Natural killer cell (primary cell): ENCODE measurements at regions of chr6 and their contacts with region 1.

Region 1: DNA sequence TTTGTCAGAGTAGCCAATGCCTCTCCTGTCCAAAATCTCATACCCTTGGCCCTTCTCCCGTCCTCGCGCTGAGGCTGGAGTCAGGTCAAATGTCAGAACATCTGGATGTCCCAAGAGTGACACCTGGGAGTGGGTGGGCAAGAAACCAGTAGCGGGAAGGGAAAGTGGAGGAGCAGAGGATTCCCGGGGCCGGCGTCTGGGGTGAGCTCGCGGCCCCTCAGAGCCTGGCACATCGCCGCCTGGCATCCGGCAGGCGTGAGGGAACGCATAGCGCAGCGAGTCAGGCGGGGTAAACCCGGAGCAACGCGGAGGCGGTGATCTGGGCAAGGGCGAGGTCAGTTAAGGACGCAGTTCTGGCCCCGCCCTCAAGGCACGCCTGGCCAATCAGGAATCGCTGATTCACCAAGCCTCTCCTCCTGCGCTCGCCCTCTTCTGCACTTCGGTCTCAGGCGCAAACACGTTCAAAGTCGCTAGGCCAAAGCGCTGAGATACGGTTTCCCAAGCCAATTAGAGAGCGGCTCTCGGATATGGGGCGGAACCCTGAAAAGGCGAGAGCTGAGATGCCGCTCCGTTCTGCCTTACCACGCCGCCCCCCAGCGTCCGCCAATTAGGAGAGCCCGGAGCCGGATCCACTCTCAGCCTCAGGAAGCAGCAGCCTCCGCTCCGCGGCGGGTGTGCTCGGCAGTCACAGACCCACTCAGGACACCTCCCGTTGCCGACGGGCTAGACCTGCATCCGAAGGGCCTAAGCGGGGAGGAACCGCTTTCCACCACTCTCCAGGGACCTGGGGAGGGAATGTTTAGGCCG is 22.5 kb downstream of the VPS52 start:
- DNase-seq: peak; percentile 96 to 99
- ATAC-seq: peak; percentile 86 to 96 (median 88)
- H3K4me3 ChIP-seq: peak overlapping the region; percentile 68
- H3K4me3 Mint-ChIP-seq: peak overlapping the region; percentile 90
- H3K27ac ChIP-seq: peak overlapping the region; percentile 94
- H3K27ac Mint-ChIP-seq: peak overlapping the region; percentile 95 to 97
- H3K4me1 ChIP-seq: peaks cover 28% of the 10 kb centered on the region
- H3K4me1 Mint-ChIP-seq: peaks cover 22 to 37% of the 10 kb centered on the region in 2 donors
- H3K27me3 ChIP-seq: no peaks in the 10 kb centered on the region
- H3K27me3 Mint-ChIP-seq: peaks cover 0 to under 1% of the 10 kb centered on the region in 2 donors
- CTCF ChIP-seq: no peak

Region 2: DNA sequence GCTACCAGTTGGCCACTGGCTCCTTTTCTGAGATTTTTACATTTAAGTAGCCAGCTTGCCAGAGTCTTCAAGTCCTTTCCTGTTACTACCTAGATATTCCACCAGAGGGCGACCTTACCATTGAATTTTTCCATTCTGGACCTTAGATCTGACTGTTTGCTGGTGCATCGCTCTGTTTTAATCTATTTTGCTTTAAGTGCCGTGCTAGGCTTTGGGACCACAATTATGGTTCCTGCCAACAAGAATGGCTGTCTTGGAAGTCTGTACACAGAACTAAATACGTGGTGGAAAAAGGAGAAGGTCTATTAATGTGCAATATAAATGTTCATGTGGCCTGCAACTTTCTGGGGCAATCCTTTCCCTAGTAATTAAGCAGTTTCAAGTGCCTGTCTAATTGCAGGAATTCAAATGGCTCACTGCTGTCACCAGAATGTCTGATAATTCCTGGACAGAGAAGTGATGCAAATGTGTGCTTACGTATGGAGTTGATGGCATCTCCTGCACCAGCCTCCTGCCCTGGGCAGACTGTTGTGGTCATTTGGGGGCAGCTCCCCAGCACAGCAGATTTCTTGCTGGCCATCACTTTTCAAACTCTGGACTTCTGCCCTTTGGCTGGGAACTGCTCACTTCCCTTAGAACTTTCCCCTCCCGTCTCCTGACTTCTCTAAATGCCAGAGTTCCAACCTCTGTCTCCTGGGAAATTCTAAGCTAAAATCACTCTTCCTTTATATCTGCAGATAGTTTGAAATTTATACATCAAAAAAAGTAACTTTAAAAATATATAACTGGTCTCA is 234.1 kb before region 1 on chr6:
- intact Hi-C with region 1: loop called (anchors 1 kb)
- DNase-seq: peak in 1 of 2 donors; percentile 90
- ATAC-seq: peak; percentile 77 to 85 (median 79)
- H3K4me3 ChIP-seq: no peak overlapping the region
- H3K4me3 Mint-ChIP-seq: no peak overlapping the region
- H3K27ac ChIP-seq: no peak overlapping the region
- H3K27ac Mint-ChIP-seq: no peak overlapping the region
- H3K4me1 ChIP-seq: peaks cover 20% of the 10 kb centered on the region
- H3K4me1 Mint-ChIP-seq: peaks cover 5 to 28% of the 10 kb centered on the region in 2 donors
- H3K27me3 ChIP-seq: no peaks in the 10 kb centered on the region
- H3K27me3 Mint-ChIP-seq: peaks cover 15 to 30% of the 10 kb centered on the region in 2 donors
- CTCF ChIP-seq: peak; percentile 80

Region 3: DNA sequence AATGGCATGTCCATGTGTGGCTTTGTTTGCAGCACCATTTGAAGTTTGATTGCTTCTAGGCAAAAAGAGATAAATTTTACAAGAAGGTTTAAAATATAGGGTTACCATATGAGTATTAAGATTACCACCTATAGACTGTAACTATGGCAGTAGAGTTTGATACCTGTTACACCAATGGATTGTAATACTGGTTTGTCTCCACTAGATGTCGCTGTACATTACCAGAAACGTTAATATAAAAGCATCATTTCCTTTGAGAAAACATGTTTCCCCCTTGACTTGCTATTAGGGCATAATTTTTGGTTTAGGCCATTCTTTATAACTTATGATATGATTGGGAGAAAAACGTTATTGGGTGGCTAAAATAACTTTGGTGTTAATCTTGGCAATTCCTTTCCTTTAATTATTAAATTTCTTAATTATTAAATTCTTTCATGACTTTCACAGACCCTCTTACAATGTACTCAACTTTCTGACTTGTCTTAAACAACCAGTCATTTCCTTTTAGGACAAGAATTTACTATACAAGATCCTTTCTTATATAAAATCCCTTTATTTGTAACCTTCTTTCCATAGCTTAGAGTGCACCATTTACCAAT is 130.5 kb before region 1 on chr6:
- intact Hi-C with region 1: loop called (anchors 1 kb)
- DNase-seq: peak in 1 of 2 donors; percentile 86
- ATAC-seq: peak; percentile 72 to 80 (median 80)
- H3K4me3 ChIP-seq: no peak overlapping the region
- H3K4me3 Mint-ChIP-seq: no peak overlapping the region
- H3K27ac ChIP-seq: no peak overlapping the region
- H3K27ac Mint-ChIP-seq: no peak overlapping the region
- H3K4me1 ChIP-seq: peaks cover 27% of the 10 kb centered on the region
- H3K4me1 Mint-ChIP-seq: peaks cover 0 to 7% of the 10 kb centered on the region in 2 donors
- H3K27me3 ChIP-seq: peaks cover 20% of the 10 kb centered on the region
- H3K27me3 Mint-ChIP-seq: peaks cover 43 to 52% of the 10 kb centered on the region in 2 donors
- CTCF ChIP-seq: peak; percentile 86

Region 4: GRCh38 chr6:33161354-33162331 is 87.5 kb before region 1 on chr6:
- intact Hi-C with region 1: loop called (anchors 1 kb)
- DNase-seq: peak; percentile 84 to 87
- ATAC-seq: peak; percentile 93 to 99 (median 99)
- H3K4me3 ChIP-seq: peak overlapping the region; percentile 44
- H3K4me3 Mint-ChIP-seq: peak overlapping the region; percentile 94
- H3K27ac ChIP-seq: no peak overlapping the region
- H3K27ac Mint-ChIP-seq: peak overlapping the region in 1 of 2 donors; percentile 90
- H3K4me1 ChIP-seq: peaks cover 12% of the 10 kb centered on the region
- H3K4me1 Mint-ChIP-seq: peaks cover 10 to 12% of the 10 kb centered on the region in 2 donors
- H3K27me3 ChIP-seq: no peaks in the 10 kb centered on the region
- H3K27me3 Mint-ChIP-seq: peaks cover 0 to 9% of the 10 kb centered on the region in 2 donors
- CTCF ChIP-seq: peak; percentile 89

Region 5: DNA sequence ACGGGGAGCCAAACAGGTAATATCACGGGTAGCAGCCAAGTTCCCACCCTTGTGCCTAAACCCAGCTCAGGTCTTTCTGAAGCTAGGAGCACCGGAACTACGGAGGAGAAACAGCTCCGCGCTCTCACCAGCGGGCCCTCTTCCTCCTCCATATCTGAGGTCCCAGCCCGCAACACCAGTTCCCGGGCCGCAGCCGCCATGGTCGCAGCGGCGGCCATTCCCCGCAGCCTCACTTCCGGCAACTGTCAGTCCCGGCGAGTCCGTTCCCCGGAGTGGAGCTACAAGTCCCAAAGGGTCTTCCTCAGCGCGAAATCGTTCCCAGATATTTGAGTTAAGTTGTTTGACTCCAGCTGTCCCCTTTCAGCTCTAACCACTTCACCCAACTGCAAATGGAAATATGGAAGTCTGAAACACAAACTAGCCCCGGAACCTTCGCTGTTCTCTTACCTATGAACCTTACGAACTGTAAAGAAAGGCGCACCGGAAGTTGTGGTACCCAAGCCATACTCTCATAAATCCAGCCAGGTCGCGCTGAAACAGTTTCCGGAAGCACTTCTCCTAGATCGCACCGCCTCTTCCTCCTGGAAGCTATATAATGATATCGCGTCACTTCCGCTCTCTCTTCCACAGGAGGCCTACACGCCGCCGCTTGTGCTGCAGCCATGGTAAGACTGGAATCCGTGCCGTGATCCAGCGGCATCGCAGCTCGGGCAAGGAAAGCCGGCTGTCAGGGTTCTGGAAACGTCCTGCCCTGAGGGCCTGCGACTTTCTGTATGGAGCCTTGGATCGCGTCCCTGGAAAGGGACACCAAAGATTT is 22.5 kb after region 1 on chr6 and contains the starts of genes RPS18 and VPS52:
- intact Hi-C with region 1: loop called (anchors 1 kb)
- DNase-seq: peak; percentile 83 to 99
- ATAC-seq: peak; percentile 86 to 95 (median 91)
- H3K4me3 ChIP-seq: peak within 1 kb of the TSS; percentile 71
- H3K4me3 Mint-ChIP-seq: peak within 1 kb of the TSS; percentile 96
- H3K27ac ChIP-seq: peak within 1 kb of the TSS; percentile 89
- H3K27ac Mint-ChIP-seq: peak within 1 kb of the TSS; percentile 97 to 98
- H3K4me1 ChIP-seq: peaks cover 40% of the 10 kb centered on the region
- H3K4me1 Mint-ChIP-seq: peaks cover 57 to 63% of the 10 kb centered on the region in 2 donors
- H3K27me3 ChIP-seq: no peaks in the 10 kb centered on the region
- H3K27me3 Mint-ChIP-seq: no peaks in the 10 kb centered on the region
- CTCF ChIP-seq: no peak
- total RNA-seq, gene RPS18: 1,182 to 1,707 (median 1,500) TPM
- total RNA-seq, gene VPS52: 98.0 to 112 (median 99.4) TPM

Region 6: DNA sequence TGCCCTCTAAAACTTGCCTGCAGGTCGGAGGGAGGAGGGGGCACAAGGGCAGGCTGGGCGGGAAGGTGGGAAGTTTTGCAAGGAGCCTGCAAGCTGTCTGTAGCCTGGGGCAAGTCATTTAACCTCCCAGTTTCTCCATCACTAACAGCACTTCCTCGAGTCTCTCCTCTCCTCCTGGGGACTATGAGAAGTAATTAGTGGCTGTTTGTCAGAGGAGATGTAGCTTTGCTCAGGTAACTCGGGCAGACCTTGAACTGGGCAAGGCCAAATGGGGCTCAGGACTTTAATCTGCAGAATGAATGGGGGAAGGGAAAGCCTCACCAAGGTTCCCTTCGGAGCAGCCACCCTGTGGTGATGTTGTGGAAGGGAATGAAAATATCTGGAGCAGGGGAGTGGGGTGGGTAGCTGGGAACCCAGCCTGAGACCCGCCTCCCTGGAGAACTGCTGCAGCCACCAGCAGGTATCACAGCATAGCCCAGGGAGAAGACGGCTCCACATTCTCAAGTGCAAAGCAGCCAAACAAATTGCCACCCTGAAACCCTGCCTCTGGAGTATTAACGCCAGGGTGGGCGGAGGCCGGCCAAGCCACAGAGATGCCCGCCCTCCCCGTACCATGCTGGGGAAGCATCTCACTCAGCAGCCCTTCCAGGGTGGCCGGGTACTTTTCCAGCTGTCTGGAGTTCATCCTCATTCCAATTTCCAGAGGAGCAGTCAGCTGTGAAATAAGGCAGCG is 545.9 kb after region 1 on chr6:
- intact Hi-C with region 1: no loop called
- DNase-seq: no peak
- ATAC-seq: peak in 1 of 3 donors; percentile 25
- H3K4me3 ChIP-seq: no peak overlapping the region
- H3K4me3 Mint-ChIP-seq: no peak overlapping the region
- H3K27ac ChIP-seq: no peak overlapping the region
- H3K27ac Mint-ChIP-seq: no peak overlapping the region
- H3K4me1 ChIP-seq: no peaks in the 10 kb centered on the region
- H3K4me1 Mint-ChIP-seq: no peaks in the 10 kb centered on the region
- H3K27me3 ChIP-seq: peaks cover 4% of the 10 kb centered on the region
- H3K27me3 Mint-ChIP-seq: peaks cover 26 to 45% of the 10 kb centered on the region in 2 donors
- CTCF ChIP-seq: no peak